Caco-2 (cell line): ENCODE measurements at regions of chr11 and their contacts with region 1.

Region 1: GRCh38 chr11:29432719-29433325 is 584.0 kb downstream of the KCNA4 start:
- DNase-seq: peak in 1 of 2 experiments; percentile 37
- H3K4me3 ChIP-seq: no peak overlapping the region
- H3K4me3 Mint-ChIP-seq: no peak overlapping the region
- H3K27ac Mint-ChIP-seq: no peak overlapping the region
- H3K4me1 ChIP-seq: no peaks in the 10 kb centered on the region
- H3K4me1 Mint-ChIP-seq: no peaks in the 10 kb centered on the region
- H3K27me3 ChIP-seq: no peaks in the 10 kb centered on the region
- H3K27me3 Mint-ChIP-seq: peaks cover 7% of the 10 kb centered on the region
- CTCF ChIP-seq: peak; percentile 39 to 42

Region 2: GRCh38 chr11:29534836-29535235 is 102.0 kb after region 1 on chr11:
- CTCF ChIA-PET with region 1: no interaction called
- POLR2A ChIA-PET with region 1: no interaction called
- intact Hi-C with region 1: no loop called
- DNase-seq: no peak
- H3K4me3 ChIP-seq: no peak overlapping the region
- H3K4me3 Mint-ChIP-seq: no peak overlapping the region
- H3K27ac Mint-ChIP-seq: no peak overlapping the region
- H3K4me1 ChIP-seq: no peaks in the 10 kb centered on the region
- H3K4me1 Mint-ChIP-seq: no peaks in the 10 kb centered on the region
- H3K27me3 ChIP-seq: no peaks in the 10 kb centered on the region
- H3K27me3 Mint-ChIP-seq: no peaks in the 10 kb centered on the region
- CTCF ChIP-seq: no peak

Region 3: DNA sequence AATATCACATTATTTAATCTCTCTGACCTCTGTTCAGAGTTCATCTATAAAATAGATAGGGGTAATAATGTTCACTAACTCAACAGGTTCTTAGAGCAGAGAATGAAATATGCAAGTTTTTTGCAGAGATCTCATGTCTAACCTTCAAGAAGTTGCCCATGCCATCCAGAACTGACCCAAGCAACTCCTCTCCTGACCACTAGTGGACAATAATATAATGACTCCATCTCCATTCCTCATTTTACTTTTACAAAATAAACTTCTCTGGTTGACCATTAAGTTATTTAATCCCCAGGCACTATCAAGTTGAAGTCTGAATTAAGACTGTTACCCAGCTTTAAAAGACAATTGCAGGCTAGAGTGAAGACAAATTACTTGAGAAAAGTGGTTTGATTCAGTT is 201.4 kb after region 1 on chr11:
- CTCF ChIA-PET with region 1: no interaction called
- POLR2A ChIA-PET with region 1: no interaction called
- intact Hi-C with region 1: loop called (anchors 5 kb)
- DNase-seq: no peak
- H3K4me3 ChIP-seq: no peak overlapping the region
- H3K4me3 Mint-ChIP-seq: no peak overlapping the region
- H3K27ac Mint-ChIP-seq: no peak overlapping the region
- H3K4me1 ChIP-seq: no peaks in the 10 kb centered on the region
- H3K4me1 Mint-ChIP-seq: no peaks in the 10 kb centered on the region
- H3K27me3 ChIP-seq: no peaks in the 10 kb centered on the region
- H3K27me3 Mint-ChIP-seq: peaks cover 10% of the 10 kb centered on the region
- CTCF ChIP-seq: no peak

Region 4: GRCh38 chr11:29682856-29683255 is 250.0 kb after region 1 on chr11:
- CTCF ChIA-PET with region 1: no interaction called
- POLR2A ChIA-PET with region 1: no interaction called
- intact Hi-C with region 1: no loop called
- DNase-seq: no peak
- H3K4me3 ChIP-seq: no peak overlapping the region
- H3K4me3 Mint-ChIP-seq: no peak overlapping the region
- H3K27ac Mint-ChIP-seq: no peak overlapping the region
- H3K4me1 ChIP-seq: no peaks in the 10 kb centered on the region
- H3K4me1 Mint-ChIP-seq: no peaks in the 10 kb centered on the region
- H3K27me3 ChIP-seq: no peaks in the 10 kb centered on the region
- H3K27me3 Mint-ChIP-seq: no peaks in the 10 kb centered on the region
- CTCF ChIP-seq: no peak

Region 5: GRCh38 chr11:30196400-30197206 is 763.8 kb after region 1 on chr11:
- CTCF ChIA-PET with region 1: no interaction called
- POLR2A ChIA-PET with region 1: no interaction called
- intact Hi-C with region 1: loop called (anchors 2 kb)
- DNase-seq: peak; percentile 65 to 70
- H3K4me3 ChIP-seq: no peak overlapping the region
- H3K4me3 Mint-ChIP-seq: no peak overlapping the region
- H3K27ac Mint-ChIP-seq: no peak overlapping the region
- H3K4me1 ChIP-seq: no peaks in the 10 kb centered on the region
- H3K4me1 Mint-ChIP-seq: no peaks in the 10 kb centered on the region
- H3K27me3 ChIP-seq: no peaks in the 10 kb centered on the region
- H3K27me3 Mint-ChIP-seq: no peaks in the 10 kb centered on the region
- CTCF ChIP-seq: peak; percentile 75 to 88

Region 6: DNA sequence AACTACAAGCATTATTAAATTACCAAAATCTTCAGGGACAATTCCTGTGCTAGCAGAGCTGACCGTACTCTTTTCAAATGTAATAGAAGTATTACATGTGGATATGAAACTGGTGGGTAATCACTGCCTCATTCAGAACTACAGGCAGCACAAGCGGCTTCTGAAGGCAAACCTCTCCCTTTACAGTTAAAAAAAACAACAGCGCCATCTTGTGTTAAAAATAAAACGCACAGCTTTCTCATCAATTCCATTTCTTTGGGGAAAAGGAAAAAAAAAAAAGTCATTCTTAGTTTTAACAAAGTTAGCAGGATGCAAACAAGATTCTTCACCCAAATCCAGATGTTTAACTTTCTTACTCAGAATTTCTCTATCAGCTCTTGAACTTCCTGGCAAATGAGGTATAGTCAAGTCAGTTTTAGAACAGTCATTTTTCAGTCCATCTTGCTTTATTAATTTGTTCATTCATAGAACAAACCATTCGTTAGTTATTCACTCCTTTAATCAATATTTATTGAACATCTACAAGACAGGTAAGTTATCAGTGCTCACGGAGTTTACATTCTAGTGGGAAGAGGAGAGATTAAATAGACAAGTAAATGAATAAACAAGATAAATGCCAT is 1485.1 kb after region 1 on chr11:
- CTCF ChIA-PET with region 1: no interaction called
- POLR2A ChIA-PET with region 1: no interaction called
- intact Hi-C with region 1: loop called (anchors 5 kb)
- DNase-seq: peak in 1 of 2 experiments; percentile 61
- H3K4me3 ChIP-seq: no peak overlapping the region
- H3K4me3 Mint-ChIP-seq: no peak overlapping the region
- H3K27ac Mint-ChIP-seq: no peak overlapping the region
- H3K4me1 ChIP-seq: no peaks in the 10 kb centered on the region
- H3K4me1 Mint-ChIP-seq: no peaks in the 10 kb centered on the region
- H3K27me3 ChIP-seq: no peaks in the 10 kb centered on the region; the same call in 1 of the 2 replicates
- H3K27me3 Mint-ChIP-seq: peaks cover 20% of the 10 kb centered on the region
- CTCF ChIP-seq: peak; percentile 55 to 75